ENCODE measurements at regions of chr1 and their contacts with region 1.

Region 1: DNA sequence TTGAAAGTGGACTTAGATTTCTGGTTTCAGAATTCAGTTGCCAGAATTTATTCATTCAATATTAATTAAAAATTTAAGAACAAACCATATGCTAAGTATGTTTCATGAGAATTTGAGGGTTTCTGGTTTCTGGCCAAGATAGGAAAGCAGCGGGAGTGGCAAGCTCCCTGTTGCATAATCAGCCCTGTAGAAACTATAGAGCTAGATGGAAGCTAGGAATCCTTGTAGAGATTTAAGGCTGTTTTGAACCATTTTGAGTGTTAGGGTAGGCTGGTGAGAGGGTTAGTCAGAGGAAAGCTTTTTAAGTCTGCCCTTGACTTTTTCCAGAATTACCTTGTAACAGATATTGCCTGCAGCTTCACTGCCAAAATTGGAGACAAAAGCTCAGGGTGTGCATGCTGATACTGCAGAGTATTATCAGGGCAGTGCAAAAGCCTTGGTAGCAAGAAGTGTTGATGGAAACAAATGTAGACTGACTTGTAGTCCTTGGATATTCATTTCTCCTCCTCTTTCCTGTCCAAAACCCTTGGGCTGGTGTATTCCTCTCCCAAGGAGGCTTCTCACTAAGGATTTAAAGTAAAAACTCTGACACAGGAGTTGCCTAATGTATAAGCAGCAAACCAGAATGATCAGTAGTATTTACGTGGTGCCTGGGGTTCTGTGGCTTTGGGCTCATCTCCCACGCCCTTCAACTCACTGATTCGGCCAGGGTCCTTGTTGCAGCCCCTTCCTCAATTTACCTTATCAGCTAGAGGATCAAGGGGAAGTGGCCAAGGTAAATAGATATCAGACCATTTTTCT is 12.6 kb upstream of the GIPC2 start:
- DNase-seq: peak; percentile 73
- H3K4me3 Mint-ChIP-seq: no peak overlapping the region
- H3K27ac Mint-ChIP-seq: no peak overlapping the region
- H3K4me1 Mint-ChIP-seq: peaks cover 19% of the 10 kb centered on the region
- H3K27me3 Mint-ChIP-seq: no peaks in the 10 kb centered on the region
- CTCF ChIP-seq: no peak

Region 2: DNA sequence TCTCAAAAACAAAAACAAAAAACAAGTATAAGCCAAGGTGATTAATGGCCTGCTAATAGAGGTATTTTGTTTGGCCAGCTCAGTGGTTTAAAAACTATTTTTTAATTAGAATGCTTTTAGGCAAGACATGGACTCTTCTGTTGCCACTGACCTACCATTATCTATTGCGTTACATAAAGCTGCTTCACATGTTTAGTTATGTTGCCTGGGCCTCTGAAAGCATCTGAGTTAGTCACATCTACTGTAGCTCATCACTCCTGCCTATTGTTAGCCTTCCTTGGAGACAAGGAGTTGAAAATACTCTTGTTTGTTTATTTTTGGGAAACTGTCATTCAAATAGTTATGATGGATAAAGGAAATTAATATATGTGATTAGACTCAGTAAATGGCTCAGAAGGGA is 14.2 kb before region 1 on chr1:
- CTCF ChIA-PET with region 1: no interaction called
- POLR2A ChIA-PET with region 1: interaction called, 10 read pairs
- intact Hi-C with region 1: no loop called
- DNase-seq: no peak
- H3K4me3 Mint-ChIP-seq: no peak overlapping the region
- H3K27ac Mint-ChIP-seq: no peak overlapping the region
- H3K4me1 Mint-ChIP-seq: peaks cover 9% of the 10 kb centered on the region
- H3K27me3 Mint-ChIP-seq: no peaks in the 10 kb centered on the region
- CTCF ChIP-seq: no peak

Region 3: DNA sequence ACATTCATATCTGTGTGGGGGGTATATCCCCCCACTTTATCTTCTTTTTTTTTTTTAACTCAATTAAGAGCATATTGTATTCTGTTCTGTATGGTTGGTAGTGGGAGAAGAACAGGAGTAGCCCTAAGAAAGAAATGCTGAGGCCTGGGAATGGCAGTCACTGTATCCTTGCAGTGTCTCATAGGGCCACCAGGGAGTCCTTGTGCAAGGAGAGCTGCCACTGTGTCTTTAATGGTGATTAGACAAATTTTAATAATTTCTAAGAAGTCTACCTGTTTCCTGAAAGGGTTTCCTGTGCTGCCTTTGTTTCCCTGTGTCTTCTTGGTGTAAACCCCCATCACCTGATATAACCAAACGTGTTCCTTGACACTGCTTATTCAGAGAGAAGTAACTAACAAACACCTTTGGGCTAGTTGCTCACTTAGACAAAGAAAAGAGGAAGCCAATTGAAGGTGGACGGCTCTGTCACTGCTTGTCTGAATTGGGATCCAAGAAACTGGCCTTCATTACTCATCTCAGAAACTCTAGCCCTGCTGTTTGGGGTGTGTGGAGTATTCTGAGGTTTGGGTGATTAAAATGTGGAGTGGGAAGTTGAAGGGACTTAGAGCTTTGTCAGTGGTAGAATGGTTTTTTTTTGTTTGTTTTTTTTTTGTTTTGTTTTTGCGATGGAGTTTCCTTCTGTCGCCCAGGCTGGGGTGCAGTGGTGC is 27.8 kb after region 1 on chr1:
- CTCF ChIA-PET with region 1: no interaction called
- POLR2A ChIA-PET with region 1: no interaction called
- intact Hi-C with region 1: no loop called
- DNase-seq: no peak
- H3K4me3 Mint-ChIP-seq: no peak overlapping the region
- H3K27ac Mint-ChIP-seq: no peak overlapping the region
- H3K4me1 Mint-ChIP-seq: peaks cover under 1% of the 10 kb centered on the region
- H3K27me3 Mint-ChIP-seq: no peaks in the 10 kb centered on the region
- CTCF ChIP-seq: no peak

Region 4: GRCh38 chr1:78101514-78101913 is 68.3 kb after region 1 on chr1:
- CTCF ChIA-PET with region 1: no interaction called
- POLR2A ChIA-PET with region 1: interaction called, 13 read pairs
- intact Hi-C with region 1: no loop called
- DNase-seq: peak; percentile 45
- H3K4me3 Mint-ChIP-seq: no peak overlapping the region
- H3K27ac Mint-ChIP-seq: peak overlapping the region; percentile 35
- H3K4me1 Mint-ChIP-seq: peaks cover 14% of the 10 kb centered on the region
- H3K27me3 Mint-ChIP-seq: no peaks in the 10 kb centered on the region
- CTCF ChIP-seq: no peak

Region 5: DNA sequence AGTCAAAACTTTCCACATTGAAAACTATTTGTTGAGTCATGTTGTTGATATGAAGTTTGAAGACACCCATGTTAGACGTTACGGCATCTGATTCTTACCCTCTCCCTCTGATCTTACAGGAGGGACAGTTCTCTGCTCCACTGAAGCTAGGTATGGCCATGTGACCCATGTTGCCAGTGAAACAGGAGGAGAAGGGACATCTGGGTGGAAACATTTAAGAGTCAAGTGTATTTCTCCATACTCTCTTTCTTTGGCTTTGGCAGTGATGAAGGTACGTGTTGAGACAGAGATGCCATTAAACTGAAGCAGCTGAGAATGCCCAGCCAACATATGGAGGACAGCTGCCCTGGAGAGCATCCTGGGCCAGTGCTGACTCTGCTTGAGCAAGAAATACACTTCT is 259.2 kb after region 1 on chr1:
- CTCF ChIA-PET with region 1: no interaction called
- POLR2A ChIA-PET with region 1: no interaction called
- intact Hi-C with region 1: no loop called
- DNase-seq: peak; percentile 41
- H3K4me3 Mint-ChIP-seq: no peak overlapping the region
- H3K27ac Mint-ChIP-seq: no peak overlapping the region
- H3K4me1 Mint-ChIP-seq: peaks cover 24% of the 10 kb centered on the region
- H3K27me3 Mint-ChIP-seq: no peaks in the 10 kb centered on the region
- CTCF ChIP-seq: no peak

Region 6: GRCh38 chr1:78370356-78370755 is 337.2 kb after region 1 on chr1:
- CTCF ChIA-PET with region 1: no interaction called
- POLR2A ChIA-PET with region 1: no interaction called
- intact Hi-C with region 1: no loop called
- DNase-seq: peak; percentile 56
- H3K4me3 Mint-ChIP-seq: peak overlapping the region; percentile 19
- H3K27ac Mint-ChIP-seq: peak overlapping the region; percentile 96
- H3K4me1 Mint-ChIP-seq: peaks cover 40% of the 10 kb centered on the region
- H3K27me3 Mint-ChIP-seq: no peaks in the 10 kb centered on the region
- CTCF ChIP-seq: no peak

Measured in MCF 10A (cell line).